AG04450 (cell line): ENCODE measurements at regions of chr12 and their contacts with region 1.

Region 1: GRCh38 chr12:51083126-51083833 is at the start of gene CSRNP2:
- DNase-seq: peak; percentile 90
- H3K4me3 ChIP-seq: peak within 1 kb of the TSS; percentile 87
- H3K27ac ChIP-seq: peak within 1 kb of the TSS; percentile 77
- H3K27me3 ChIP-seq: no peaks in the 10 kb centered on the region
- CTCF ChIP-seq: no peak
- polyA plus RNA-seq, gene CSRNP2: 26.4 and 29.9 TPM in 2 replicates

Region 2: GRCh38 chr12:50901685-50902113 is 181.6 kb before region 1 on chr12:
- CTCF ChIA-PET with region 1: no interaction called
- POLR2A ChIA-PET with region 1: no interaction called
- DNase-seq: no peak
- H3K4me3 ChIP-seq: no peak overlapping the region
- H3K27ac ChIP-seq: no peak overlapping the region
- H3K27me3 ChIP-seq: no peaks in the 10 kb centered on the region
- CTCF ChIP-seq: no peak

Region 3: DNA sequence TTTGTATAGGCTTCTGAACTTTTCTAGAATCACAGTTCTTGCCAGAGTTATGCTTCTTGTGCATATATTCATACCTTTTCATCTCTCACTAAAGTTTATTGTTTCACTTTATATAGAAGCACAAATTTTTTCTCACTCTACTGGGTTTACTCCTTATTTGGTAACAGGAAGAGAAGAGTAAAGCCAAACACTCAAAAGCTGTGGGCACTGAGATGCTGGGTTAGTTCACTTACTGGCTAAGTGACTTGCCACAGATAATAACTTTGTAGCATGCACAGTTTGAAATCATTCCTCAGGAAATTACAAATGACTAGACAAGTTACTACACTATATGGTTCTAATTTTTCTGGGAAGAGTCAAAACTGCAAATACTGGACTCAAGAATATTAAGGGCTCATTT is 123.2 kb before region 1 on chr12:
- CTCF ChIA-PET with region 1: no interaction called
- POLR2A ChIA-PET with region 1: no interaction called
- DNase-seq: no peak
- H3K4me3 ChIP-seq: no peak overlapping the region
- H3K27ac ChIP-seq: no peak overlapping the region
- H3K27me3 ChIP-seq: no peaks in the 10 kb centered on the region
- CTCF ChIP-seq: no peak

Region 4: GRCh38 chr12:51025836-51026638 is 57.2 kb before region 1 on chr12 and contains the start of gene SLC11A2:
- CTCF ChIA-PET with region 1: no interaction called
- POLR2A ChIA-PET with region 1: interaction called, 19 read pairs
- DNase-seq: peak; percentile 77
- H3K4me3 ChIP-seq: peak within 1 kb of the TSS; percentile 88
- H3K27ac ChIP-seq: peak within 1 kb of the TSS; percentile 87
- H3K27me3 ChIP-seq: no peaks in the 10 kb centered on the region
- CTCF ChIP-seq: 0 out of 2 replicates have a peak, but pooled peaks have one; percentile 7
- polyA plus RNA-seq, gene SLC11A2: 83.3 and 91.2 TPM in 2 replicates

Region 5: DNA sequence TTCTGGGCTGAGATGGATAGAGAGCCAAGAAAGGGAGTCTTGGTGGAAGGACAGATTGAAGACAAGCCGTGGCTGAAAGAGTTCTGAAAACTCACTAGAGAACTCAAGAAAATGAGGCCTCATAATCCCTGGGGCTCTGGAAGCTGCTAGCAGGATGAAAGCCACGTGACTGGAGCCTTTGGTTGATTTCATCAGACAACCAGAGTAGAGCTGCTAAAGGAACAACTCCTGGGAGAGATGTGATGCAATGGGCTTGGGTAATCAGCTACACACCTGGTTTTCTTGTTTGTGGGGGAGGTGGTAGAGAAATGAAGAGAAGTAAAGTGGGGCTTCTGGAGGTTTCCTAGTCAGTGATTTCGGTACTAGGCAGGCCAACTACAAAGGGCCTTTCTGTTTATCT is 13.3 kb before region 1 on chr12:
- CTCF ChIA-PET with region 1: no interaction called
- POLR2A ChIA-PET with region 1: interaction called, 20 read pairs
- DNase-seq: no peak
- H3K4me3 ChIP-seq: no peak overlapping the region
- H3K27ac ChIP-seq: peak overlapping the region; percentile 57
- H3K27me3 ChIP-seq: no peaks in the 10 kb centered on the region
- CTCF ChIP-seq: no peak